Right lobe of liver (tissue), 6 donors: ENCODE measurements at regions of chr11 and their contacts with region 1.

Region 1: GRCh38 chr11:118290923-118291322 is 13.6 kb upstream of the CD3E start:
- DNase-seq: peak in 2 of 3 donors; percentile 27 to 68
- ATAC-seq: peak; percentile 94 to 97 (median 96)
- H3K4me3 ChIP-seq: no peak overlapping the region
- H3K27ac ChIP-seq: no peak overlapping the region
- H3K4me1 ChIP-seq: peaks cover 0 to under 1% (median 0%) of the 10 kb centered on the region in 4 donors
- H3K27me3 ChIP-seq: no peaks in the 10 kb centered on the region
- CTCF ChIP-seq: peak; percentile 55 to 75 (median 67)
- POLR2A ChIP-seq: no peak

Region 2: GRCh38 chr11:118145285-118146227 is 145.4 kb before region 1 on chr11:
- intact Hi-C with region 1: loop called in 1 of 2 experiments (anchors 10 kb)
- DNase-seq: peak; percentile 92 to 93 (median 93)
- ATAC-seq: peak; percentile 98 to 99 (median 98)
- H3K4me3 ChIP-seq: peak overlapping the region; percentile 53 to 57 (median 55)
- H3K27ac ChIP-seq: no peak overlapping the region
- H3K4me1 ChIP-seq: peaks cover 0 to 7% (median 0%) of the 10 kb centered on the region in 4 donors
- H3K27me3 ChIP-seq: peaks cover 0 to 7% of the 10 kb centered on the region in 2 donors
- CTCF ChIP-seq: peak in 3 of 4 donors; percentile 93 to 99 (median 95)
- POLR2A ChIP-seq: no peak

Region 3: DNA sequence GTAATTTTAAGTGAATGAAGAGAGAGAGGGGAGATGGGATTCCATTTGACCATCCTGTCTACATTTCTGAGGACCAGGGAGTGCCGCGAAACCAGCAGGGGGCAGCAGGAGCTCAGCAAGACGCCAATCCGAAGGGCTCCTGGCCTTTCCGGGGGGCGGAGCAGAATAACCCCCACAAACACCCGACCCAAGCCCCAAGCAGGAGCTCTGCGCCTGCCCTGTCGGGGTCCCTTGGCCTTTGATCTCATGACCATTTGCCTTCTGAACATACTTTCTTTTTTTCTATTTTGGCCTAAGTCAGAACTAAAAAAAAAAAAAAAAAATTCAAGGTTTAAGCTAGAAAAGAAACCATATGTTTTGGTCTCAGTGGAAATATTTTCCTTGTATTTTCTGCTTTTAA is 92.6 kb before region 1 on chr11:
- intact Hi-C with region 1: loop called in 1 of 2 experiments (anchors 5 kb)
- DNase-seq: peak; percentile 83 to 85 (median 84)
- ATAC-seq: peak; percentile 47 to 62 (median 54)
- H3K4me3 ChIP-seq: peak overlapping the region in 1 of 3 donors; percentile 36
- H3K27ac ChIP-seq: peak overlapping the region in 2 of 3 donors; percentile 35 to 48
- H3K4me1 ChIP-seq: peaks cover 0 to 51% (median 20%) of the 10 kb centered on the region in 4 donors
- H3K27me3 ChIP-seq: no peaks in the 10 kb centered on the region
- CTCF ChIP-seq: peak; percentile 79 to 93 (median 92)
- POLR2A ChIP-seq: no peak

Region 4: DNA sequence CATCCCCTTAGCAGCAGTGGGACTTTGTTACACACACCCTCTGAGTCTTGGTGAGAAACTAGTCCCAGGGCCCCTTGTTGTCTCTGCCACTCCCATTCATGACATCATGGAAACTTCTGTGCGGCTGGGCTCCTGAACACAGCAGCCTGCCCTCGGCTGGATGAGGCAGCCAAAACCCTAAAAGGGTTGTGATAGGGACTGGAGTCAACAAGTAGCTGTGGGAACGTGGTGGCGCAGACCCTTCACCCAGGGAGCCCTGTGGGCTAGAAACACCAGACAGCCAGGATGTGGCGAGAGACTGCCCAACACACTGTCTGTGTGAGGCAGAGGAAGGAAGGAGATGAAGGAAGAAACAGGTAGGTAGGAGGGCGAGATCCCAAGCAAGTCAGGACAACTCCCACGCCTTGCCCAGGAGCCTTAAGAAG is 47.7 kb after region 1 on chr11:
- intact Hi-C with region 1: no loop called
- DNase-seq: no peak
- ATAC-seq: peak in 3 of 4 donors; percentile 33 to 54 (median 39)
- H3K4me3 ChIP-seq: no peak overlapping the region
- H3K27ac ChIP-seq: no peak overlapping the region
- H3K4me1 ChIP-seq: no peaks in the 10 kb centered on the region
- H3K27me3 ChIP-seq: no peaks in the 10 kb centered on the region
- CTCF ChIP-seq: no peak
- POLR2A ChIP-seq: no peak

Region 5: GRCh38 chr11:118415739-118416284 is 124.9 kb after region 1 on chr11:
- intact Hi-C with region 1: no loop called
- DNase-seq: peak in 1 of 3 donors; percentile 27
- ATAC-seq: peak in 3 of 4 donors; percentile 35 to 83 (median 43)
- H3K4me3 ChIP-seq: no peak overlapping the region
- H3K27ac ChIP-seq: no peak overlapping the region
- H3K4me1 ChIP-seq: no peaks in the 10 kb centered on the region
- H3K27me3 ChIP-seq: no peaks in the 10 kb centered on the region
- CTCF ChIP-seq: no peak
- POLR2A ChIP-seq: no peak